CD4-positive, alpha-beta memory T cell (primary cell): ENCODE measurements at regions of chr2 and their contacts with region 1.

Region 1: DNA sequence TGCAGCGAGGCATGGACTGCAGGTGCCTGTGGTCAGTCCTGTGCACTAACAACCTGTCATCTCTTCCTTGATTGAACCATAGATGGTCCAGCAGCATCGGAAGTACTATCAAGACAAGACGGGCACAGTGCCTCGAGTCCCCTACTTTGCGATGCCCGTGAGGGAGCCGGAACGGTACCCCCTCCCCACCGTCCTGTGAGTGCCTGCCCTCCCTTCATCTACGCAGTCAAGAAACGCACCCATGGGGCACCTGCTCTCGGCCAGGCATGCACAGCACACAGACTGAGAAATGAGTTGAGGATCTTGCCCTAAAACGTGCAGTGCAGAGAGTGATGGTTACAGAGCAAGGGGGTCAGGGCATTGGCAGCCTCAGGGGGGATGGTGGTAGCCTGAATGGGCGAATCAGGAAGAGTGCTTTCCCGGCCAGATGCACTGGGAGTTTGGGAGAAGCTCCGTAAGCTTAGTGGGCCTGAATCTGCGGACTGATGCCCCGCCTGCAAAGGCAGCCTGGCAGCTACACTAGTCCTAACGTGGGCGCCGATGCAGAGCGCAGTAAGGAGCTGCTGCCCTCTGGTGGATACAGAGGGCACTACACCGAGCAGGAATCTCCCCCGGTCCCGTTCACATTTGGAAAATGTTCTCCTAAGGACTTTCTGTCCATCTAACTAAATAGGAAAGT is 63.6 kb downstream of the CIB4 start:
- DNase-seq: peak; percentile 36 to 52 (median 50)
- H3K4me3 ChIP-seq: no peak overlapping the region
- H3K4me3 Mint-ChIP-seq: no peak overlapping the region
- H3K27ac ChIP-seq: no peak overlapping the region
- H3K27ac Mint-ChIP-seq: peak overlapping the region in 1 of 7 donors; percentile 9
- H3K4me1 ChIP-seq: no peaks in the 10 kb centered on the region
- H3K4me1 Mint-ChIP-seq: peaks cover 0 to 4% (median 1%) of the 10 kb centered on the region in 4 donors
- H3K27me3 ChIP-seq: no peaks in the 10 kb centered on the region
- H3K27me3 Mint-ChIP-seq: peaks cover 11 to 26% of the 10 kb centered on the region in 2 donors

Region 2: GRCh38 chr2:26235085-26235484 is 342.5 kb before region 1 on chr2:
- CTCF ChIA-PET with region 1: no interaction called
- POLR2A ChIA-PET with region 1: no interaction called
- intact Hi-C with region 1: loop called (anchors 10 kb)
- DNase-seq: peak in 2 of 5 donors; percentile 2 to 4
- H3K4me3 ChIP-seq: no peak overlapping the region
- H3K4me3 Mint-ChIP-seq: no peak overlapping the region
- H3K27ac ChIP-seq: no peak overlapping the region
- H3K27ac Mint-ChIP-seq: no peak overlapping the region
- H3K4me1 ChIP-seq: peaks cover 5% of the 10 kb centered on the region
- H3K4me1 Mint-ChIP-seq: peaks cover 6 to 9% (median 7%) of the 10 kb centered on the region in 4 donors
- H3K27me3 ChIP-seq: no peaks in the 10 kb centered on the region
- H3K27me3 Mint-ChIP-seq: no peaks in the 10 kb centered on the region

Region 3: DNA sequence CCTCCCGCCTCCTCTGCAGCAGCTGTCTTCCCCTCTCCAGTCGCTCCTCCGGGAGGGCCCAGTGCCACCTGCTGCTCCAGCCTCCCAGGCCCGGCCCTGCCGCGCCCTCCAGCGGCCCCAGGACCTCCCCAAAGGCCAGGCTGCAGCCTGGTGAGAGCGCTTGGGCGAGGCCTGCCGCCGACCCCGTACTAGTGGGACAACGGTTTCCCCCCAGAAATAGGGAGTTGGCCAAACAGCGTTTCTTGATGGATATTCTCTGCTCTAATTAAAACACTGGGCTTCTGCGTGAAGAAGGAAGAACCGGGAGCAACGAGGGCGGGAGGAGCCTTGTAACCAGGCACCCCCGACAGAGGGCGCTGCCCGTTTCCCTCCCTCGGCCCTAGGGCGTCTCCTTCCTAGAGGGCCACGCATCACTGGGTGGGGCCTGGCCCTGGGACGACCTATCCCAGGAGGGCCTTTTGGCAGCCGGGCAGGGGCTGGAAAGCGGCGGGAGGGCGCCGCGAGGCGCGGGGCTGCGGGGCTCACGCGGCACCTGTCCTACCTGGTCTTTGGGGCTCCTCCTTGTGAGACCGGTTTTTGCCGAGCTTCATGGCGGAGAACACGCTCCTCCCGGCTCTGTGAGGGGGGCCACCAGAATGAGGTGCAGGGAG is 74.2 kb before region 1 on chr2:
- CTCF ChIA-PET with region 1: interaction called, 37 read pairs
- POLR2A ChIA-PET with region 1: no interaction called
- intact Hi-C with region 1: loop called (anchors 1 kb)
- DNase-seq: peak; percentile 64 to 75 (median 73)
- H3K4me3 ChIP-seq: peak overlapping the region; percentile 53 to 67
- H3K4me3 Mint-ChIP-seq: peak overlapping the region; percentile 53 to 87 (median 80)
- H3K27ac ChIP-seq: no peak overlapping the region
- H3K27ac Mint-ChIP-seq: peak overlapping the region in 4 of 7 donors; percentile 10 to 83 (median 55)
- H3K4me1 ChIP-seq: peaks cover 13% of the 10 kb centered on the region
- H3K4me1 Mint-ChIP-seq: peaks cover 3 to 11% (median 6%) of the 10 kb centered on the region in 4 donors
- H3K27me3 ChIP-seq: no peaks in the 10 kb centered on the region
- H3K27me3 Mint-ChIP-seq: peaks cover 0 to 5% of the 10 kb centered on the region in 2 donors

Region 4: GRCh38 chr2:26542194-26542455 is 35.4 kb before region 1 on chr2:
- CTCF ChIA-PET with region 1: interaction called, 14 read pairs
- POLR2A ChIA-PET with region 1: no interaction called
- intact Hi-C with region 1: no loop called
- DNase-seq: no peak
- H3K4me3 ChIP-seq: no peak overlapping the region
- H3K4me3 Mint-ChIP-seq: no peak overlapping the region
- H3K27ac ChIP-seq: no peak overlapping the region
- H3K27ac Mint-ChIP-seq: no peak overlapping the region
- H3K4me1 ChIP-seq: no peaks in the 10 kb centered on the region
- H3K4me1 Mint-ChIP-seq: no peaks in the 10 kb centered on the region
- H3K27me3 ChIP-seq: no peaks in the 10 kb centered on the region
- H3K27me3 Mint-ChIP-seq: peaks cover 1 to 5% of the 10 kb centered on the region in 2 donors

Region 5: GRCh38 chr2:26591619-26592505 is 14.3 kb after region 1 on chr2:
- CTCF ChIA-PET with region 1: interaction called, 26 read pairs
- POLR2A ChIA-PET with region 1: no interaction called
- intact Hi-C with region 1: no loop called
- DNase-seq: no peak
- H3K4me3 ChIP-seq: no peak overlapping the region
- H3K4me3 Mint-ChIP-seq: no peak overlapping the region
- H3K27ac ChIP-seq: no peak overlapping the region
- H3K27ac Mint-ChIP-seq: no peak overlapping the region
- H3K4me1 ChIP-seq: no peaks in the 10 kb centered on the region
- H3K4me1 Mint-ChIP-seq: peaks cover 0 to 6% (median 0%) of the 10 kb centered on the region in 4 donors
- H3K27me3 ChIP-seq: peaks cover 4% of the 10 kb centered on the region
- H3K27me3 Mint-ChIP-seq: peaks cover 31 to 40% of the 10 kb centered on the region in 2 donors